ENCODE measurements at regions of chr5 and their contacts with region 1.

Region 1: GRCh38 chr5:892394-893136 is at the starts of genes BRD9 and TRIP13:
- DNase-seq: peak; percentile 88 to 93
- ATAC-seq: peak; percentile 95 to 98 (median 97)
- H3K4me3 ChIP-seq: peak within 1 kb of the TSS; percentile 87
- H3K27ac ChIP-seq: peak within 1 kb of the TSS; percentile 96
- H3K4me1 ChIP-seq: peaks cover 11% of the 10 kb centered on the region
- H3K27me3 ChIP-seq: no peaks in the 10 kb centered on the region
- CTCF ChIP-seq: peak; percentile 11
- total RNA-seq, gene BRD9: 21.3 to 28.0 (median 22.3) TPM
- total RNA-seq, gene TRIP13: 0.39 to 0.89 (median 0.76) TPM

Region 2: GRCh38 chr5:463952-464351 is 428.6 kb before region 1 on chr5:
- intact Hi-C with region 1: loop called in 1 of 2 experiments (anchors 10 kb)
- DNase-seq: peak in 1 of 2 donors; percentile 50
- ATAC-seq: no peak
- H3K4me3 ChIP-seq: no peak overlapping the region
- H3K27ac ChIP-seq: no peak overlapping the region
- H3K4me1 ChIP-seq: no peaks in the 10 kb centered on the region
- H3K27me3 ChIP-seq: no peaks in the 10 kb centered on the region
- CTCF ChIP-seq: no peak